CD4-positive, alpha-beta memory T cell (primary cell): ENCODE measurements at regions of chr19 and their contacts with region 1.

Region 1: DNA sequence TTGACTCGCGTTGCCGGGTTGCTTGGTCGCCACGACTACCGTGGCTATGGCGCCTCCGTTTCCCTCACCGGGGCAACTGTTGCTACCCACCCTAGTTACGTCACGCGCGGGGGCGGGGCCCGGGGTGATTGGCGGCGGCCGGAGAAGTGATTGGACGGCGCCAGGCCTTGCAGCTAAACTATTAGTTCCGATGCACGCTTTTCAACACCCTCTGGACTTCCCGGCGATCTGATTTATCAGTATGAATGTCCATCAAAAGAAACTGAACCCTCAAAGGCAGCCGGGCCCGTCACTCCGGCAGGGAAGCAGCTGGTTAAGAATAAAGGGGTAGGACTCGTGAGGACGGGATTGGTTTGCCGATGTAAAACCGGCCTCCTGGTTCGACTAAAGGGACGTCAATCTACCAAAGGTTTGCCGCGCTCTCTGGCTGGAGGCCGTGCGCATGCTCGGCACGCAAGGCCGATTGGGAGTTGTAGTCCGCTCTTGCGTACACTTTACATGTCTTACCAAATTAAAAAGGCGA is at the start of gene RFX1:
- DNase-seq: peak; percentile 100
- H3K4me3 ChIP-seq: peak within 1 kb of the TSS; percentile 58 to 82
- H3K4me3 Mint-ChIP-seq: peak within 1 kb of the TSS; percentile 91 to 98 (median 96)
- H3K27ac ChIP-seq: peak within 1 kb of the TSS; percentile 99
- H3K27ac Mint-ChIP-seq: peak within 1 kb of the TSS; percentile 97 to 100 (median 100)
- H3K4me1 ChIP-seq: peaks cover 47% of the 10 kb centered on the region
- H3K4me1 Mint-ChIP-seq: peaks cover 29 to 51% (median 39%) of the 10 kb centered on the region in 4 donors
- H3K27me3 ChIP-seq: no peaks in the 10 kb centered on the region
- H3K27me3 Mint-ChIP-seq: peaks cover 0 to 2% of the 10 kb centered on the region in 2 donors
- total RNA-seq, gene RFX1: 17.4 to 17.8 TPM

Region 2: DNA sequence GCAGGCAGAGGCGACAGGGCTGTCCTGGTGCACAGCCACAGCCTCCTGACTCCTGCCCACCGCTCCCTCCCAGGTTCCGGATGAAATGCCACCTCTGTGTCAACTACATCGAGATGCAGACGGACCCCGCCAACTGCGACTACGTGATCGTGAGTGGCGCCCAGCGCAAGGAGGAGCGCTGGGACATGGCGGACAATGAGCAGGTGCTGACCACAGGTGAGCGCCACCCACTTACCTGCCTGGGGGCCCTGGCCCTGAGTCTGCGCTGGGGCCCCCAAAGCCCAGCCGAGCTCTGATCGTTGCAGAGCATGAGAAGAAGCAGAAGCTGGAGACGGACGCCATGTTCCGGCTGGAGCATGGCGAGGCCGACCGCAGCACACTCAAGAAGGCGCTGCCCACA is 247.5 kb before region 1 on chr19:
- CTCF ChIA-PET with region 1: no interaction called
- POLR2A ChIA-PET with region 1: no interaction called
- intact Hi-C with region 1: no loop called
- DNase-seq: no peak
- H3K4me3 ChIP-seq: no peak overlapping the region
- H3K4me3 Mint-ChIP-seq: no peak overlapping the region
- H3K27ac ChIP-seq: no peak overlapping the region
- H3K27ac Mint-ChIP-seq: no peak overlapping the region
- H3K4me1 ChIP-seq: peaks cover 2% of the 10 kb centered on the region
- H3K4me1 Mint-ChIP-seq: peaks cover 2 to 10% (median 5%) of the 10 kb centered on the region in 4 donors
- H3K27me3 ChIP-seq: no peaks in the 10 kb centered on the region
- H3K27me3 Mint-ChIP-seq: no peaks in the 10 kb centered on the region

Region 3: DNA sequence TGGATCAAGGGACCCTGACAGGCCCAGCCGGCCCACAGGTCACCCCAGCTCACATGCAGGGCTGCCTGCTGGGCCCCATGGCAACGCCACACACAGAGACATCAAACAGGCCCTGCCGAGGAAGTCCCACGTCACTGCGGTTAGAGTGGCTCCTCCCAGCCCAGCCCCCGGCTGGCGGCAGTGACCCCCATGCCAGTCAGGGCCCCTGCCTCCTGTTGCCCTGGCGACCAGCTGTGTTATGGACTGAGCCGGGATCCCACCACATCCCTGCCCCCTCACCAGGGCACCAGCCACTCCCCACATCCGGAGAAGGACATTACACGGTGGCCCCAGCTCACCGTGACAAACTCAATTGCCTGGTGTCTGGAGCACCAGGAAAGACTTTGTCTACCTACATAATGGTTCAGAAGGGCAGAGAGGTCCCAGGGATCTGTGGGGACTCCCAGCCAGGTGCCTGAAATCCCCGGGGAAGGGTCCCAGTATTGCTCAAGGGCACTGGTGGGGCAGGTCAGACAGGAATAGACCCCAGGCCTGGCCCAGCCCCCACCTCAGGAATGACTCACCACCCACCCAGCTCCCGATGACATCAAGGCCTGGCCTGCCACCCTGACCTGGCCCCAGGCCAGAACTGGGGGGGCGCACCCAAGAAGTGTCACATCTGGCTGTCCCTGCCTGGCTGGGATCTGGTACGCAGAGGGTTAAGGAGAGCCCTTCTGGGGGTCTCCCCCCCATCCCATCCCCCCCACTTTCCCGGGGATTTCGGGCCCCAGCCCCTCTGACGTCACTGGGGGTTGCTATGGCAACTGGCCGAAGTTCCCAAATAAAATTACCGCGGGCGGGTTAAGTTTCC is 159.5 kb before region 1 on chr19:
- CTCF ChIA-PET with region 1: no interaction called
- POLR2A ChIA-PET with region 1: interaction called, 6 read pairs
- intact Hi-C with region 1: loop called (anchors 2 kb)
- DNase-seq: peak; percentile 99
- H3K4me3 ChIP-seq: peak overlapping the region; percentile 50 to 79
- H3K4me3 Mint-ChIP-seq: peak overlapping the region; percentile 83 to 98 (median 90)
- H3K27ac ChIP-seq: peak overlapping the region; percentile 99
- H3K27ac Mint-ChIP-seq: peak overlapping the region; percentile 99 to 100 (median 100)
- H3K4me1 ChIP-seq: peaks cover 69% of the 10 kb centered on the region
- H3K4me1 Mint-ChIP-seq: peaks cover 33 to 77% (median 50%) of the 10 kb centered on the region in 4 donors
- H3K27me3 ChIP-seq: no peaks in the 10 kb centered on the region
- H3K27me3 Mint-ChIP-seq: peaks cover 0 to 4% of the 10 kb centered on the region in 2 donors

Region 4: GRCh38 chr19:13952154-13953035 is 53.9 kb before region 1 on chr19 and contains the start of gene DCAF15:
- CTCF ChIA-PET with region 1: interaction called, 3 read pairs
- POLR2A ChIA-PET with region 1: interaction called, 119 read pairs
- intact Hi-C with region 1: loop called (anchors 1 kb)
- DNase-seq: peak; percentile 98 to 100 (median 99)
- H3K4me3 ChIP-seq: peak within 1 kb of the TSS; percentile 43 to 71
- H3K4me3 Mint-ChIP-seq: peak within 1 kb of the TSS; percentile 88 to 96 (median 92)
- H3K27ac ChIP-seq: peak within 1 kb of the TSS; percentile 80
- H3K27ac Mint-ChIP-seq: peak within 1 kb of the TSS; percentile 86 to 99 (median 96)
- H3K4me1 ChIP-seq: peaks cover 22% of the 10 kb centered on the region
- H3K4me1 Mint-ChIP-seq: peaks cover 12 to 28% (median 17%) of the 10 kb centered on the region in 4 donors
- H3K27me3 ChIP-seq: no peaks in the 10 kb centered on the region
- H3K27me3 Mint-ChIP-seq: no peaks in the 10 kb centered on the region
- total RNA-seq, gene DCAF15: 92.9 to 96.7 TPM

Region 5: DNA sequence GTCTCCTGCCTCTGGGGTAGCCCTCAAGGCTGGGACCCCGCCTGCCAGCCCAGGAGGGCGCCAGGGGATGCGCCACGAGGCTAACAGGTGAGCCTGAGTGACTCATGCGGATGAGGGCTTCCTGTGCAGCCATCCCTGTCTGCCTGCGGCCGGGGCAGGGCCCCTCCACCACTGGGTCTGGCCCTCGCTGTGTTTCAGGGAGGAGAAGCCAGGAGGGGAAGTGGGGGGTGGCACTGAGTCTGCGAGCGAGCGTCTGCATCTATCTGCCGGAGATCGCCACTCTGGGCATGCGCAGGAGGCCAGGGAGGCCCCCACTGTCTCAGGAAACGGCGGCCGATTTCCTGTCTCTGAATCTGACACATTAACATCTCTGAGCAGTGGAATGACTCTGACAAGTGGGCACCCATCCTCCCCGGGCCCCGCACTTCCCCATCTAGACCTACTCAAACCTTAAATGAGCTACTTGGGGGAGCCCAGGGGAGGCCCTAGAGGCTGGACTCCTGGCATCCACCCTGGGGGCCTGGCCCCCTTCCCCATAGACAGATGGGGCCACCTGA is 19.9 kb before region 1 on chr19:
- CTCF ChIA-PET with region 1: interaction called, 43 read pairs
- POLR2A ChIA-PET with region 1: interaction called, 200 read pairs
- intact Hi-C with region 1: loop called (anchors 1 kb)
- DNase-seq: peak; percentile 96 to 100 (median 98)
- H3K4me3 ChIP-seq: peak overlapping the region; percentile 43 to 49
- H3K4me3 Mint-ChIP-seq: peak overlapping the region; percentile 69 to 93 (median 74)
- H3K27ac ChIP-seq: peak overlapping the region; percentile 95
- H3K27ac Mint-ChIP-seq: peak overlapping the region; percentile 95 to 100 (median 98)
- H3K4me1 ChIP-seq: peaks cover 84% of the 10 kb centered on the region
- H3K4me1 Mint-ChIP-seq: peaks cover 35 to 93% (median 65%) of the 10 kb centered on the region in 4 donors
- H3K27me3 ChIP-seq: no peaks in the 10 kb centered on the region
- H3K27me3 Mint-ChIP-seq: no peaks in the 10 kb centered on the region

Region 6: DNA sequence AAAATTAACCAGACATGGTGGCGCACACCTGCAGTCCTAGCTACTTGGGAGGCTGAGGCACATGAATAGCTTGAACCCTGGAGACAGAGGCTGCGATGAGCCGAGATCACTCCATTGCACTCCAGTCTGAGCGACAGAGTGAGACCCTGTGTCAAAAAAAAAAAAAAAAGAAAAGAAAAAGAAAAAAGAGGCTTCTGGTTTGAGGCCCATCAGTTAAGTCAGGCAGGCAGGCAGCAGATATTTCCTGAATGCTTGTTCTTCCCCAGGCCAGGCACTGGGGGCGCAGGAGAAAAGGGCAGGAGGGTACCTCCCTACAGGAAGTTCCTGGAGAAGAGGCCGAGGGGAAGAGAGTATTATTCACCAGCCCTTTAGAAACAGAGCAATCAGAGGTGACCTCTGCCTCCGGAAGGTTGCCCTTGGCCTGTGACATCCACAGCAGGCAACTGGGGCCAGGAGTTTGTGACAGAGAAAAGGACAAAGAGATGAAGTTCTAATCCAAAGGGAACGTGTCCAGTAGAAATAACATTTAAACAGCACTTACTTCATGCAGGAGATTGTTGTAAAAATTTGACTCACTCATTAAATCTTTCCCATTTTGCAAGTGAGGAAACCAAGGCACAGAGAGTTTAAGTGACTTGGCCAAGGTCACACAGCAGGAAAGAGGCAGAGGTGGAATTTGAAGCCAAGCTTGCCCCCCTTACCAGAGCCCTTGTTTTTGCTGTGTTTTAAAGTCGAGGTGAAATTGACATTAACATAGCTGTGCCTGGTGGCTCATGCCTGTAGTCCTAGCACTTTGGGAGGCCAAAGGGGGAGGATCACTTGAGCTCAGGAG is 17.3 kb after region 1 on chr19:
- CTCF ChIA-PET with region 1: interaction called, 3 read pairs
- POLR2A ChIA-PET with region 1: interaction called, 225 read pairs
- intact Hi-C with region 1: no loop called
- DNase-seq: no peak
- H3K4me3 ChIP-seq: no peak overlapping the region
- H3K4me3 Mint-ChIP-seq: no peak overlapping the region
- H3K27ac ChIP-seq: no peak overlapping the region
- H3K27ac Mint-ChIP-seq: peak overlapping the region in 3 of 7 donors; percentile 55 to 80 (median 79)
- H3K4me1 ChIP-seq: peaks cover 10% of the 10 kb centered on the region
- H3K4me1 Mint-ChIP-seq: peaks cover 3 to 18% (median 10%) of the 10 kb centered on the region in 4 donors
- H3K27me3 ChIP-seq: no peaks in the 10 kb centered on the region
- H3K27me3 Mint-ChIP-seq: no peaks in the 10 kb centered on the region

Region 7: GRCh38 chr19:14059093-14059480 is 52.8 kb after region 1 on chr19:
- CTCF ChIA-PET with region 1: no interaction called
- POLR2A ChIA-PET with region 1: interaction called, 10 read pairs
- intact Hi-C with region 1: no loop called
- DNase-seq: peak in 4 of 5 donors; percentile 20 to 43 (median 42)
- H3K4me3 ChIP-seq: no peak overlapping the region
- H3K4me3 Mint-ChIP-seq: peak overlapping the region in 7 of 8 donors; percentile 42 to 84 (median 61)
- H3K27ac ChIP-seq: no peak overlapping the region
- H3K27ac Mint-ChIP-seq: peak overlapping the region in 1 of 7 donors; percentile 40
- H3K4me1 ChIP-seq: peaks cover 18% of the 10 kb centered on the region
- H3K4me1 Mint-ChIP-seq: peaks cover 9 to 28% (median 16%) of the 10 kb centered on the region in 4 donors
- H3K27me3 ChIP-seq: peaks cover 17% of the 10 kb centered on the region
- H3K27me3 Mint-ChIP-seq: peaks cover 13 to 22% of the 10 kb centered on the region in 2 donors

Region 8: GRCh38 chr19:14081325-14082093 is 75.2 kb after region 1 on chr19:
- CTCF ChIA-PET with region 1: no interaction called
- POLR2A ChIA-PET with region 1: interaction called, 9 read pairs
- intact Hi-C with region 1: loop called (anchors 1 kb)
- DNase-seq: peak; percentile 98 to 99 (median 99)
- H3K4me3 ChIP-seq: peak overlapping the region; percentile 61 to 74
- H3K4me3 Mint-ChIP-seq: peak overlapping the region; percentile 87 to 97 (median 92)
- H3K27ac ChIP-seq: peak overlapping the region; percentile 68
- H3K27ac Mint-ChIP-seq: peak overlapping the region; percentile 84 to 98 (median 95)
- H3K4me1 ChIP-seq: peaks cover 18% of the 10 kb centered on the region
- H3K4me1 Mint-ChIP-seq: peaks cover 5 to 28% (median 17%) of the 10 kb centered on the region in 4 donors
- H3K27me3 ChIP-seq: no peaks in the 10 kb centered on the region
- H3K27me3 Mint-ChIP-seq: no peaks in the 10 kb centered on the region

Region 9: GRCh38 chr19:14183741-14184350 is 177.5 kb after region 1 on chr19:
- CTCF ChIA-PET with region 1: no interaction called
- POLR2A ChIA-PET with region 1: no interaction called
- intact Hi-C with region 1: no loop called
- DNase-seq: no peak
- H3K4me3 ChIP-seq: no peak overlapping the region
- H3K4me3 Mint-ChIP-seq: no peak overlapping the region
- H3K27ac ChIP-seq: no peak overlapping the region
- H3K27ac Mint-ChIP-seq: no peak overlapping the region
- H3K4me1 ChIP-seq: no peaks in the 10 kb centered on the region
- H3K4me1 Mint-ChIP-seq: no peaks in the 10 kb centered on the region
- H3K27me3 ChIP-seq: no peaks in the 10 kb centered on the region
- H3K27me3 Mint-ChIP-seq: no peaks in the 10 kb centered on the region